Activated CD4-positive, alpha-beta T cell treated with anti-CD3 and anti-CD28 coated beads for 36 hours (primary cell): ENCODE measurements at regions of chr6 and their contacts with region 1.

Region 1: DNA sequence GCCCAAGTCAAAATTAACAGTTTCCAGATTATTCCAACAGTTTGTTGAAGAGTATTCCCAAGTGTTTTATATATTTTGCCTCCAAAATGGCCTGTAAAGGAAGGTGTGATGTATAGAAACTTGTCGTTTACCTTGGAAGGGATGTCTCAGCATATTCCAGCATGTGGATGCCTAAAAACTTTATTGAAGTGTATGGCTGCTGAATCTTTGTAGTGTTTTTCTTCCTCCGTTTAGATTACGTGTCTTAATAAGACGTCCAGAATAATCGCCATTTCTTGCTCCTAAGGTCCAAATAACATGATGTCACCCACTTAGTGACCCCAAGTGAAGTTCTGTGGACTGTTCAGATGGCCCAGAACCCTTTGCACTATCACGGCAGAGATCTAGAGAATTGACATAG is 18.0 kb upstream of the SF3B5 start:
- DNase-seq: no peak
- ATAC-seq: no peak
- H3K4me3 Mint-ChIP-seq: no peak overlapping the region
- H3K27ac Mint-ChIP-seq: no peak overlapping the region
- H3K4me1 Mint-ChIP-seq: no peaks in the 10 kb centered on the region
- H3K27me3 Mint-ChIP-seq: no peaks in the 10 kb centered on the region

Region 2: DNA sequence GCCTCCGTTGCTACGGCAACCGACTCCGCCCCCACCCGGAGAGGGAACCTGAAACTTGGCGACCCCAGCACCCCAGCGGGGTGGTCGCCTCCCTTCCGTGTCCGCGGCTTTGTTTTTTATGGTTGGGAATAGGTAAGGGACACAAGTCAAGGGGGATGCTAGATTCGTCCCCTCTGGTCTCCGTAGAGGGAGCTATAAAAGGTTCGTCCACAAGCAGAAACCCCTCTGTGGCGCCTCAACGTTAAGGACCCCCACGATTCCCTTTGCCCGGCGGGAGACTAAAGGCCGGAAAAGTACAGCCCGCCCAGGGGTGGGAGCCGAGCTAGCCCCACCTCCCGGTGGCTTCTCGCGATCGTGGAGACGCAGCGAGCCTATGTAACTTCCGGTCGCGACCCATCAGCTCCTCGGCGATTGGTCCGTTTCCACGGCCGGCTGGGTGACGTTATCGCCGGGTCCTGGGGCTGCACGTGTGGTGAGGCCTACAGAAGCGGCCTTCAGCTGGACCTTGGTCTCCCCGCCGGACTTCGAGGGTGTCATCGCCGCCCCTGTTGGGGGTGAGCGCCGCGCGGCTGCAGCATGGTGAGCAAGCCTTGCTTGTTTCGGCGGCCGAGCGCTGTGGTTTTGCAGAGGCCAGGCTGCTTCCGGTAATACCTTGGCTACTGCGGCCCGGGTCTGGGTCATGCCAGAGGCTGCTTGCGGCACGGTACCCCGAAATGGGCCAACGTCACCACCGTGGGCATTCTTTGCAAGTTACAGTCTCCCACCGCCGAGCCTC is 270.3 kb before region 1 on chr6 and contains the start of gene LTV1:
- CTCF ChIA-PET with region 1: no interaction called
- POLR2A ChIA-PET with region 1: no interaction called
- intact Hi-C with region 1: no loop called
- DNase-seq: peak; percentile 96
- ATAC-seq: peak; percentile 99
- H3K4me3 Mint-ChIP-seq: peak within 1 kb of the TSS; percentile 93
- H3K27ac Mint-ChIP-seq: peak within 1 kb of the TSS; percentile 96
- H3K4me1 Mint-ChIP-seq: peaks cover 34% of the 10 kb centered on the region
- H3K27me3 Mint-ChIP-seq: no peaks in the 10 kb centered on the region
- total RNA-seq, gene LTV1: 34.3 to 36.3 TPM

Region 3: GRCh38 chr6:144049386-144049785 is 64.0 kb before region 1 on chr6:
- CTCF ChIA-PET with region 1: no interaction called
- POLR2A ChIA-PET with region 1: no interaction called
- intact Hi-C with region 1: no loop called
- DNase-seq: no peak
- ATAC-seq: no peak
- H3K4me3 Mint-ChIP-seq: no peak overlapping the region
- H3K27ac Mint-ChIP-seq: no peak overlapping the region
- H3K4me1 Mint-ChIP-seq: peaks cover 8% of the 10 kb centered on the region
- H3K27me3 Mint-ChIP-seq: no peaks in the 10 kb centered on the region

Region 4: GRCh38 chr6:144123836-144124235 is 10.5 kb after region 1 on chr6:
- CTCF ChIA-PET with region 1: interaction called, 11 read pairs
- POLR2A ChIA-PET with region 1: no interaction called
- intact Hi-C with region 1: no loop called
- DNase-seq: no peak
- ATAC-seq: no peak
- H3K4me3 Mint-ChIP-seq: no peak overlapping the region
- H3K27ac Mint-ChIP-seq: no peak overlapping the region
- H3K4me1 Mint-ChIP-seq: peaks cover 2% of the 10 kb centered on the region
- H3K27me3 Mint-ChIP-seq: no peaks in the 10 kb centered on the region

Region 5: DNA sequence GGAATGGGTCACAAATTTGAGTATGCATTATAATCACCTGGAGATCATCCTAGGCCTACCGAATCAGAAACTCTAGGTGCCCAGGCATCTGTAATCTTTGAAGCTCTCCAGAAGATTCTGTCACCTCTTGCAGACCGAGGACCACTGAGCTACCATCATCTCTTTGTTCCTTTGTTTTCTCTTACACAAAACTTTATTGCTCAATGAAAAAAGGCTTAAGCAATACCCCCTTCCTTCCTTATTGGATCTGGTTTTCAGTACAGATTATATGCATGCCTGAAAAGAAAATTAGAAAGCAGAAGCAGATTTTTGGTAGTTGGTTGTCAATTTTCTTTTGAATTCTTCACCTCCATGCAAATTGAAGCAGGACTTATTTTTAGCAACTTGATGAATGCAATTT is 68.3 kb after region 1 on chr6:
- CTCF ChIA-PET with region 1: no interaction called
- POLR2A ChIA-PET with region 1: no interaction called
- intact Hi-C with region 1: no loop called
- DNase-seq: no peak
- ATAC-seq: no peak
- H3K4me3 Mint-ChIP-seq: no peak overlapping the region
- H3K27ac Mint-ChIP-seq: no peak overlapping the region
- H3K4me1 Mint-ChIP-seq: peaks cover 59% of the 10 kb centered on the region
- H3K27me3 Mint-ChIP-seq: no peaks in the 10 kb centered on the region